ENCODE measurements at regions of chr7 and their contacts with region 1.

Region 1: DNA sequence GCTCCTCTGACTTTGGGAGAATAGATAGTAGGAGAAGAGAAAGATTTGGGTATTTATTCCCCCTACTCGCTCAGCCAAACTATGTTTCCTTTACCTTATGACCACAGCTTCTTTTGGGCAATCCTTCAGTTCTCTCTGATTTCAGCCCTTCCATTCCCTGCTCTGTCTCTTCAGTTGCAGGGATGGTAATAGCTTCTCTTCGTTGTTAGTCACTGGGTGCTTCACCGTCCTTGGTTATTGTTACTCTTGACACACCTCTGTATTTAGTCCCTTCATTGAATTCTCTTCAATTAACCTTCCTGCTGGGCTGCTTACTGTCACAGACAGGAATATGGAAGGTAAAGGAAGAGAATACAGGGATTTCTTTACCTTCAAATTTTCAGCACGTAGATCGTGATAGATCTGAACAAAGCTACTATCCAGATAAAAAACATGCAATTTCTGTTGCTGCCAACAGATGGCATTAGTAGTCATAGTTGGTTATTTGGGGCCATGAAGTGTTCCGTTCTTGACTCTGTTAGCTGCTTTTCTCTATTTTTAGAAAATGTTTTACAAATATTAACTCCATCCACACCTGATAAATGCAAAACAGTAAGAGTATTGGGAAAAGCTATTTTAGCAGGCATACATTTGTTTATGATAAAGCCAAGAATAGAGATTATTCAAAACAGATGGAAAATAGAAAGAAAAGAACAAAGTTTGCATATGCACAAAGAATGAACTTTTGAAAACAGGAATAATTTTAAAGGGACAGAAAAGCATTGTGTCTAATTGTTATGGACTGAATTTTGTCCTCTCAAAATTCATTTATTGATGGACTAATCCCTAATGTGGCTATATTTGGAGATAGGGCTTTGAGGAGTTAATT is 14.0 kb upstream of the PTTG1IP2 start:
- DNase-seq: peak; percentile 33
- H3K4me3 ChIP-seq: no peak overlapping the region
- H3K27ac ChIP-seq: no peak overlapping the region
- H3K4me1 ChIP-seq: no peaks in the 10 kb centered on the region
- CTCF ChIP-seq: peak; percentile 85

Region 2: DNA sequence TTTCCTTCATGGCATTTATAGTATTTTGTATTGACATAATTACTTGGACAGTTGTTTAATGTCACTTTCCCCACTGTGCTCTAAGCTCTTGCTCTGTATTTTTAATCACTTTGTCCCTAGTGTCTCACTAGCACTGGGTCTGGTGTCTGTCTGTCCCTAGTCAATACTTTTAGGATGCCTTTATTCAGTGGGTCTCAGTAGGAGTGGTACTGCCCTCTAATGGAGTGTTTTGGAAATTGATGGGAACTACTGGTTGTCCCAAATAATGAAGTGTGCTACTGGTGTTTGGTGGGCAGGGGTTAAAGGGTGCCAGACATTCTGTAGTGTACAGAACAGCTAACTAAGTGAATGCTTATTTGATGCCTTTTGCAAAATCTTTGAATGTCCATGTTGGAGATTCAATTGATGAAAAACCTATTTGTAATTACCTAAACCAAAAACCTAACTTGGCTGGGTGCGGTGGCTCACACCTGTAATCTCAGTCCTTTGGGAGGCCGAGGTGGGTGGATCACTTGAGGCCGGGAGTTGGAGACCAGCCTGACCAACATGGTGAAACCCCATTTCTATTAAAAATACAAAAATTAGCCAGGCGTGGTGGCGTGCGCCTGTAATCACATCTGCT is 174.0 kb after region 1 on chr7:
- CTCF ChIA-PET with region 1: no interaction called
- POLR2A ChIA-PET with region 1: no interaction called
- intact Hi-C with region 1: loop called (anchors 2 kb)
- DNase-seq: peak; percentile 49
- H3K4me3 ChIP-seq: no peak overlapping the region
- H3K27ac ChIP-seq: no peak overlapping the region
- H3K4me1 ChIP-seq: no peaks in the 10 kb centered on the region
- CTCF ChIP-seq: peak; percentile 84

Measured in OCI-LY7 (cell line).